HCT116 (cell line): ENCODE measurements at regions of chr15 and their contacts with region 1.

Region 1: GRCh38 chr15:99704444-99704838 is 28.8 kb downstream of the LYSMD4 start:
- DNase-seq: peak; percentile 78
- ATAC-seq: peak; percentile 65
- H3K4me3 ChIP-seq: no peak overlapping the region
- H3K27ac ChIP-seq: no peak overlapping the region
- H3K4me1 ChIP-seq: peaks cover 17 to 31% of the 10 kb centered on the region in 2 experiments
- H3K27me3 ChIP-seq: no peaks in the 10 kb centered on the region
- CTCF ChIP-seq: peak; percentile 60 to 83 (median 79); a peak in 5 of 6 replicates
- POLR2A ChIP-seq: no peak
- RAD21 ChIP-seq: peak; percentile 89

Region 2: GRCh38 chr15:99282121-99282520 is 422.3 kb before region 1 on chr15:
- CTCF ChIA-PET with region 1: interaction called, 88 read pairs
- POLR2A ChIA-PET with region 1: interaction called, 4 read pairs
- RAD21 ChIA-PET with region 1: interaction called, 3 read pairs
- intact Hi-C with region 1: loop called (anchors 1 kb)
- DNase-seq: no peak
- ATAC-seq: no peak
- H3K4me3 ChIP-seq: no peak overlapping the region
- H3K27ac ChIP-seq: no peak overlapping the region
- H3K4me1 ChIP-seq: no peaks in the 10 kb centered on the region
- H3K27me3 ChIP-seq: no peaks in the 10 kb centered on the region
- CTCF ChIP-seq: no peak
- POLR2A ChIP-seq: no peak
- RAD21 ChIP-seq: no peak

Region 3: DNA sequence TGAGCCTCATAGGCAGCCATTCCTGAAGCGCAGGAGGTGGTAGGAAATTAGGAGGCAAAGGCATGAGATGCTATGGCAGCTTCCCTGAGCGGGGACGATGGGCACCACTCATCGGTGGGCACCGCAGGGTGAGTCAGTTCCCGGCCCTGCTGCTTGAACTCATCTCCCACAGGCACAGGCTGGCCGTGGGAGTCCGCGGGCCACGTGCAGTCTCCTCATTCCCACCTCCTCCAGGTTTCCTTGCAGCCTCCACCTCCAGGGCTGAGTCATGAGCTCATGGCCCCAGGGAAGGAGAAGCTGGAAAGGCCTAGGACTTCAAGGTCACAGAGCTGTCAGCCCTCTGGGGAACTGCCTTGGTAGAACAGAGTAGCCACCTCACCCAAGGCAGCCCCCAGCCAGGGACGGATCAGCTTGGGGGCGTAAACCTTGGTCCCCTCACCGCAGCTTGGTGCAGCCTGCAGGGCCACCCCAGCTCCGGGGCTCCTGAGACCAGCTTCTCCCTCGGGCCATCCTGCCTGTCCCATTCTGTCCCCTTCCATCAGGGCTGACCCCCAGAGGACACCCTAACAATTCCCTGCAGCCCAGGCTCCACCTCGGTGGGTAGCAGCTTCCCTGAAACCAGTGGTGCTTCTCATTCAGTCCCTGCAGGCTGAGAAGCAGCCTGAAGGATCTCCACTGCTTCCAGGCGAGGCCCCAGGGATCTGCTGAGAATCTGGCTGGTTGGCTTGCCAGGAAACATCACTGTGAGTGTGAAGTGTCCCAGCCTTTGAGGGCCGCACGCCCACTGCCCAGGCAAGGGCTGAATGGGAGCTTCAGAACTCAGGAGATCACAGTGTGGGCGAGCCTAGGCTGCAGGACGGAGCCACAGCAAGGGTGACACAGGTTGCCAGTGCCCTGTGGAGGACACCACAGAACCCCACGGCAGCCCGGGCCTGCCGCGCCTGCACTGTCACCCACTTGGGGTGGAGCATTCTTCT is 289.4 kb before region 1 on chr15:
- CTCF ChIA-PET with region 1: interaction called, 62 read pairs
- POLR2A ChIA-PET with region 1: no interaction called
- RAD21 ChIA-PET with region 1: no interaction called
- intact Hi-C with region 1: no loop called
- DNase-seq: no peak
- ATAC-seq: 0 out of 2 replicates have a peak, but pooled peaks have one; percentile 20
- H3K4me3 ChIP-seq: no peak overlapping the region
- H3K27ac ChIP-seq: no peak overlapping the region
- H3K4me1 ChIP-seq: peaks cover 0 to 7% of the 10 kb centered on the region in 2 experiments; a peak in 1 of 4 replicates
- H3K27me3 ChIP-seq: no peaks in the 10 kb centered on the region
- CTCF ChIP-seq: no peak
- POLR2A ChIP-seq: no peak
- RAD21 ChIP-seq: no peak

Region 4: GRCh38 chr15:99565299-99566156 is 138.9 kb before region 1 on chr15 and contains the start of gene MEF2A:
- CTCF ChIA-PET with region 1: interaction called, 14 read pairs
- POLR2A ChIA-PET with region 1: interaction called, 3 read pairs
- RAD21 ChIA-PET with region 1: no interaction called
- intact Hi-C with region 1: loop called (anchors 5 kb)
- DNase-seq: peak; percentile 84
- ATAC-seq: peak; percentile 83
- H3K4me3 ChIP-seq: peak within 1 kb of the TSS; percentile 68 to 80
- H3K27ac ChIP-seq: peak within 1 kb of the TSS; percentile 80
- H3K4me1 ChIP-seq: peaks cover 6 to 15% of the 10 kb centered on the region in 2 experiments; a peak in 3 of 4 replicates
- H3K27me3 ChIP-seq: peaks cover 3% of the 10 kb centered on the region; the same call in 1 of the 2 replicates
- CTCF ChIP-seq: no peak
- POLR2A ChIP-seq: peak; percentile 40
- RAD21 ChIP-seq: no peak
- total RNA-seq, gene MEF2A: 29.6 TPM

Region 5: GRCh38 chr15:99719096-99719541 is 14.7 kb after region 1 on chr15:
- CTCF ChIA-PET with region 1: interaction called, 15 read pairs
- POLR2A ChIA-PET with region 1: no interaction called
- RAD21 ChIA-PET with region 1: no interaction called
- intact Hi-C with region 1: no loop called
- DNase-seq: no peak
- ATAC-seq: no peak
- H3K4me3 ChIP-seq: no peak overlapping the region
- H3K27ac ChIP-seq: no peak overlapping the region
- H3K4me1 ChIP-seq: no peaks in the 10 kb centered on the region
- H3K27me3 ChIP-seq: no peaks in the 10 kb centered on the region
- CTCF ChIP-seq: no peak
- POLR2A ChIP-seq: no peak
- RAD21 ChIP-seq: no peak

Region 6: GRCh38 chr15:99755692-99756409 is 51.4 kb after region 1 on chr15:
- CTCF ChIA-PET with region 1: interaction called, 41 read pairs
- POLR2A ChIA-PET with region 1: interaction called, 4 read pairs
- RAD21 ChIA-PET with region 1: interaction called in 1 of 2 experiments, 5 read pairs
- intact Hi-C with region 1: loop called (anchors 2 kb)
- DNase-seq: peak; percentile 56
- ATAC-seq: peak; percentile 97
- H3K4me3 ChIP-seq: no peak overlapping the region
- H3K27ac ChIP-seq: no peak overlapping the region
- H3K4me1 ChIP-seq: no peaks in the 10 kb centered on the region; a peak in 1 of 4 replicates
- H3K27me3 ChIP-seq: no peaks in the 10 kb centered on the region
- CTCF ChIP-seq: peak; percentile 74 to 89 (median 85)
- POLR2A ChIP-seq: no peak
- RAD21 ChIP-seq: peak; percentile 92

Region 7: GRCh38 chr15:99895189-99895955 is 190.9 kb after region 1 on chr15:
- CTCF ChIA-PET with region 1: no interaction called
- POLR2A ChIA-PET with region 1: no interaction called
- RAD21 ChIA-PET with region 1: no interaction called
- intact Hi-C with region 1: no loop called
- DNase-seq: no peak
- ATAC-seq: no peak
- H3K4me3 ChIP-seq: no peak overlapping the region
- H3K27ac ChIP-seq: no peak overlapping the region
- H3K4me1 ChIP-seq: no peaks in the 10 kb centered on the region
- H3K27me3 ChIP-seq: no peaks in the 10 kb centered on the region; the same call in none of the 2 replicates
- CTCF ChIP-seq: no peak
- POLR2A ChIP-seq: no peak
- RAD21 ChIP-seq: no peak

Region 8: GRCh38 chr15:101489236-101489632 is 1784.8 kb after region 1 on chr15:
- CTCF ChIA-PET with region 1: no interaction called
- POLR2A ChIA-PET with region 1: no interaction called
- RAD21 ChIA-PET with region 1: no interaction called
- intact Hi-C with region 1: no loop called
- DNase-seq: peak; percentile 18
- ATAC-seq: peak; percentile 83
- H3K4me3 ChIP-seq: peak overlapping the region; percentile 55 to 63; a peak in 3 of 4 replicates
- H3K27ac ChIP-seq: peak overlapping the region; percentile 32; the same call in 1 of the 2 replicates
- H3K4me1 ChIP-seq: peaks cover 6 to 25% of the 10 kb centered on the region in 2 experiments; a peak in 3 of 4 replicates
- H3K27me3 ChIP-seq: no peaks in the 10 kb centered on the region
- CTCF ChIP-seq: no peak
- POLR2A ChIP-seq: no peak
- RAD21 ChIP-seq: no peak